ENCODE measurements at regions of chr1 and their contacts with region 1.

Region 1: GRCh38 chr1:208159555-208160258 is 84.5 kb downstream of the PLXNA2 start:
- DNase-seq: peak; percentile 35 to 76 (median 74)
- ATAC-seq: peak; percentile 35 to 42
- H3K4me3 ChIP-seq: no peak overlapping the region
- H3K27ac ChIP-seq: peak overlapping the region; percentile 30
- H3K4me1 ChIP-seq: peaks cover 29% of the 10 kb centered on the region
- H3K27me3 ChIP-seq: no peaks in the 10 kb centered on the region

Region 2: DNA sequence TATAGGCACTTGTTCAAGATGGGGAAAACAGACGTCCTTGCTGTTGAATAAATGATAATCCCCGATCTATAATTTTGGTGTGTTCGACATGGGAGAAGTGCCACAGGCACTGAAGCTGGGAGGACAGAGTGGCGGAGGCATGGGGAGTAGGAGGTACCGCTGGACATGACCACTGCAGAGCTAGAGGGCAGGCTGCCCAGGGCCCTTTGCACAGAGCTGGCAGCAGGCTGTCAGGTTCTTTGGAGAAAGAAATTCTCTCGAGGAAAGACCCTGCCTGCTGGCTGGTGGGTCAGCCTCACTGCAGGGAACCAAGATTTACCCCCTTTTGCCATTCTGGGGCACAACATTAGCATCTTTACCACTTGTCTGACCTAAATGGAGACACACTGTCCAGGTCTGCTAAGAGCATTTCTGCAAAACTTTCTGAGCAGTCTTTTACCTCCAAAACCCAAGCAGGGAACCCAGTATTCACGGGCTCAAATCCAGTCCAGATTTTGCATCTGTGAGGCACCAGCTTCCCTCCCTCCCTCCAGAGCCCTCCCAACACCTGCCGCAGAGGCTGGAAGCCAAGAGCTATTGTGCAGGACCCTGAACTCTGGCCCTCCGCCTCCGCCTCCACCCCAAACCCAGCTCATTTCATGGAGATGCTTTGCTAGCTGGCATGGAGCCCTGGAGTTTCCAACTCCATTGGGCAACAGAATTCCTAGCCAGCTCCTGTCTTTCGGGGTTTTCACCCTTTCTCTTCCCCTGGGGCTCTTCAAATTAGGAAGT is 57.9 kb before region 1 on chr1:
- intact Hi-C with region 1: loop called in 1 of 4 experiments (anchors 10 kb)
- DNase-seq: peak; percentile 63 to 78 (median 74)
- ATAC-seq: peak; percentile 53 to 61
- H3K4me3 ChIP-seq: no peak overlapping the region
- H3K27ac ChIP-seq: no peak overlapping the region
- H3K4me1 ChIP-seq: peaks cover 8% of the 10 kb centered on the region
- H3K27me3 ChIP-seq: no peaks in the 10 kb centered on the region

Measured in right cardiac atrium (tissue), 5 donors.